ENCODE measurements at regions of chr9 and their contacts with region 1.

Region 1: GRCh38 chr9:108272349-108272899 is 583.4 kb downstream of the ACTL7B start:
- DNase-seq: peak; percentile 54 to 70
- H3K4me3 ChIP-seq: peak overlapping the region; percentile 6; the same call in 1 of the 2 replicates
- H3K4me3 Mint-ChIP-seq: peak overlapping the region; percentile 66
- H3K27ac Mint-ChIP-seq: peak overlapping the region; percentile 98
- H3K4me1 ChIP-seq: peaks cover 48% of the 10 kb centered on the region
- H3K4me1 Mint-ChIP-seq: peaks cover 47% of the 10 kb centered on the region
- H3K27me3 ChIP-seq: no peaks in the 10 kb centered on the region
- H3K27me3 Mint-ChIP-seq: no peaks in the 10 kb centered on the region
- CTCF ChIP-seq: peak; percentile 44 to 48

Region 2: GRCh38 chr9:107460203-107461023 is 812.0 kb before region 1 on chr9:
- CTCF ChIA-PET with region 1: no interaction called
- POLR2A ChIA-PET with region 1: no interaction called
- intact Hi-C with region 1: loop called (anchors 2 kb)
- DNase-seq: peak; percentile 79 to 83
- H3K4me3 ChIP-seq: no peak overlapping the region
- H3K4me3 Mint-ChIP-seq: peak overlapping the region; percentile 12
- H3K27ac Mint-ChIP-seq: peak overlapping the region; percentile 70
- H3K4me1 ChIP-seq: peaks cover 30% of the 10 kb centered on the region
- H3K4me1 Mint-ChIP-seq: peaks cover 18% of the 10 kb centered on the region
- H3K27me3 ChIP-seq: no peaks in the 10 kb centered on the region
- H3K27me3 Mint-ChIP-seq: no peaks in the 10 kb centered on the region
- CTCF ChIP-seq: no peak

Region 3: GRCh38 chr9:107489687-107490605 is 782.5 kb before region 1 on chr9 and contains the start of gene KLF4:
- CTCF ChIA-PET with region 1: no interaction called
- POLR2A ChIA-PET with region 1: no interaction called
- intact Hi-C with region 1: loop called (anchors 1 kb)
- DNase-seq: peak; percentile 90 to 92
- H3K4me3 ChIP-seq: peak within 1 kb of the TSS; percentile 75
- H3K4me3 Mint-ChIP-seq: peak within 1 kb of the TSS; percentile 79
- H3K27ac Mint-ChIP-seq: peak within 1 kb of the TSS; percentile 87
- H3K4me1 ChIP-seq: peaks cover 12% of the 10 kb centered on the region
- H3K4me1 Mint-ChIP-seq: peaks cover 7% of the 10 kb centered on the region
- H3K27me3 ChIP-seq: no peaks in the 10 kb centered on the region
- H3K27me3 Mint-ChIP-seq: peaks cover under 1% of the 10 kb centered on the region
- CTCF ChIP-seq: no peak
- total RNA-seq, gene KLF4: 4.9 and 7.2 TPM in 2 replicates

Region 4: DNA sequence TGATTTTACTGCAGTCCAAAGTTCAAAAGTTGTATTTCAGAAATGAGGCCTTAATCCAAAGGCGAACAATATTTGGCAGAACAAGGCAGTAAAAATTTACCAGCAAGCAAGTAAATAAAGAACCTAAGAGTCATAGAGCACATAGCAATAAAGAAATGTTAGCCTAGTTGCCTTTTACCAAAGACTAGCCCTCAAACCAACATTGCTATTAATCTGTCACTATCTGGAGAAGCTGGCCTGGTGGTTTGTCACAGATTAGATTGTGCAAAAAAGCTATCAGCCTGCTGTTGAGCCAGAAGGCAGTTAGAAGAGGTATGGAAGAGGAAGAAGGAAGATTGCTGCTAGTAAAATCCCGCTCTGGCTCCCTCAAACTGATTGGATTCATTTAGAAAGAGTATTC is 478.2 kb before region 1 on chr9:
- CTCF ChIA-PET with region 1: no interaction called
- POLR2A ChIA-PET with region 1: no interaction called
- intact Hi-C with region 1: loop called (anchors 1 kb)
- DNase-seq: peak; percentile 49 to 60
- H3K4me3 ChIP-seq: no peak overlapping the region
- H3K4me3 Mint-ChIP-seq: no peak overlapping the region
- H3K27ac Mint-ChIP-seq: no peak overlapping the region
- H3K4me1 ChIP-seq: peaks cover 40% of the 10 kb centered on the region
- H3K4me1 Mint-ChIP-seq: peaks cover 21% of the 10 kb centered on the region
- H3K27me3 ChIP-seq: no peaks in the 10 kb centered on the region
- H3K27me3 Mint-ChIP-seq: no peaks in the 10 kb centered on the region
- CTCF ChIP-seq: no peak

Region 5: GRCh38 chr9:108049026-108049591 is 223.3 kb before region 1 on chr9:
- CTCF ChIA-PET with region 1: no interaction called
- POLR2A ChIA-PET with region 1: no interaction called
- intact Hi-C with region 1: loop called (anchors 5 kb)
- DNase-seq: peak in 1 of 2 experiments; percentile 20
- H3K4me3 ChIP-seq: no peak overlapping the region
- H3K4me3 Mint-ChIP-seq: no peak overlapping the region
- H3K27ac Mint-ChIP-seq: no peak overlapping the region
- H3K4me1 ChIP-seq: no peaks in the 10 kb centered on the region
- H3K4me1 Mint-ChIP-seq: peaks cover 15% of the 10 kb centered on the region
- H3K27me3 ChIP-seq: no peaks in the 10 kb centered on the region
- H3K27me3 Mint-ChIP-seq: no peaks in the 10 kb centered on the region
- CTCF ChIP-seq: no peak

Region 6: GRCh38 chr9:108156270-108156998 is 116.0 kb before region 1 on chr9:
- CTCF ChIA-PET with region 1: interaction called, 3 read pairs
- POLR2A ChIA-PET with region 1: no interaction called
- intact Hi-C with region 1: loop called (anchors 1 kb)
- DNase-seq: peak; percentile 79 to 85
- H3K4me3 ChIP-seq: peak overlapping the region; percentile 21; the same call in 1 of the 2 replicates
- H3K4me3 Mint-ChIP-seq: peak overlapping the region; percentile 11
- H3K27ac Mint-ChIP-seq: peak overlapping the region; percentile 26
- H3K4me1 ChIP-seq: peaks cover 28% of the 10 kb centered on the region
- H3K4me1 Mint-ChIP-seq: peaks cover 19% of the 10 kb centered on the region
- H3K27me3 ChIP-seq: no peaks in the 10 kb centered on the region
- H3K27me3 Mint-ChIP-seq: no peaks in the 10 kb centered on the region
- CTCF ChIP-seq: no peak